ENCODE measurements at regions of chr11 and their contacts with region 1.

Region 1: GRCh38 chr11:113730887-113731726 is 25.0 kb upstream of the TMPRSS5 start:
- DNase-seq: peak; percentile 49
- ATAC-seq: no peak
- H3K4me3 Mint-ChIP-seq: no peak overlapping the region
- H3K27ac Mint-ChIP-seq: no peak overlapping the region
- H3K4me1 Mint-ChIP-seq: peaks cover 11% of the 10 kb centered on the region
- H3K27me3 Mint-ChIP-seq: no peaks in the 10 kb centered on the region

Region 2: GRCh38 chr11:113305440-113306336 is 425.4 kb before region 1 on chr11:
- CTCF ChIA-PET with region 1: interaction called, 13 read pairs
- DNase-seq: peak; percentile 79
- ATAC-seq: peak; percentile 98
- H3K4me3 Mint-ChIP-seq: no peak overlapping the region
- H3K27ac Mint-ChIP-seq: no peak overlapping the region
- H3K4me1 Mint-ChIP-seq: peaks cover 1% of the 10 kb centered on the region
- H3K27me3 Mint-ChIP-seq: peaks cover 13% of the 10 kb centered on the region

Region 3: DNA sequence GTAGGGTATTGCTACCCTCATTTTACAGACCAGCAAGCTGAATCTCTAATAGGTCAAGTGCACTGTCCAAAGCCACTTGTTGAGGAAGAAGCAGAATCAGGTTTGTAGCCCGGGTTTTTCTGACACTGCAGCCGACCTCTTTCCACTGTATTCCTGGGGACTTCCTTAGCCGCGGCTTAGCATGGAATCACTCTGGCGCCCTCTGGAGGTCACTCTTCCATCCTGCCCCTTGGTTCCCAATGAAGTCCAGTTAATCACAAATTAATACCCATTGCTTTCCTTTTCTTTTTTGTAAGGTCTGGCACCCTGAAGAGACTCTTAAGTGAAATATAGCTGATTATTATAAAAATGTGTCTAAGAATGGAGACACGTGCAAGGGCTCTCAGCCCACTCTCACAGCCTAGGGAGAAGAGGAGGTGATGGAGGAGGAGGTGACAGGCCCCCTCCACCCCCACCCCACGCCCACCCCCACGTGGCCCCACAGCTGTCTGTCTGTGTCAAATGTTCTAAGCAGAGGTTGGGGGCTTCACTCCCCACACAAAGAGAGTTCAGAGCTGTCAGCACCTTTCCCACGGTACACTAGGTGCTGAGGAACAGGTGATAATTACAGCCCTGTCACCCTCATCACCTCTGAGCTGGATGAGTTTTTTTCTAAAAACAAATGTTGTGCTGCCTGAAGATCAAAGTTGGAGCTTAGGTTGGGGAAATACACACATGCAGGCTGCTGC is 198.2 kb before region 1 on chr11:
- CTCF ChIA-PET with region 1: interaction called, 12 read pairs
- DNase-seq: peak; percentile 63
- ATAC-seq: peak; percentile 58
- H3K4me3 Mint-ChIP-seq: no peak overlapping the region
- H3K27ac Mint-ChIP-seq: no peak overlapping the region
- H3K4me1 Mint-ChIP-seq: no peaks in the 10 kb centered on the region
- H3K27me3 Mint-ChIP-seq: peaks cover 66% of the 10 kb centered on the region

Region 4: GRCh38 chr11:113587308-113587739 is 143.8 kb before region 1 on chr11:
- CTCF ChIA-PET with region 1: interaction called, 16 read pairs
- DNase-seq: peak; percentile 89
- ATAC-seq: peak; percentile 98
- H3K4me3 Mint-ChIP-seq: peak overlapping the region; percentile 0
- H3K27ac Mint-ChIP-seq: peak overlapping the region; percentile 97
- H3K4me1 Mint-ChIP-seq: peaks cover 79% of the 10 kb centered on the region
- H3K27me3 Mint-ChIP-seq: no peaks in the 10 kb centered on the region